ENCODE measurements at regions of chr20 and their contacts with region 1.

Region 1: DNA sequence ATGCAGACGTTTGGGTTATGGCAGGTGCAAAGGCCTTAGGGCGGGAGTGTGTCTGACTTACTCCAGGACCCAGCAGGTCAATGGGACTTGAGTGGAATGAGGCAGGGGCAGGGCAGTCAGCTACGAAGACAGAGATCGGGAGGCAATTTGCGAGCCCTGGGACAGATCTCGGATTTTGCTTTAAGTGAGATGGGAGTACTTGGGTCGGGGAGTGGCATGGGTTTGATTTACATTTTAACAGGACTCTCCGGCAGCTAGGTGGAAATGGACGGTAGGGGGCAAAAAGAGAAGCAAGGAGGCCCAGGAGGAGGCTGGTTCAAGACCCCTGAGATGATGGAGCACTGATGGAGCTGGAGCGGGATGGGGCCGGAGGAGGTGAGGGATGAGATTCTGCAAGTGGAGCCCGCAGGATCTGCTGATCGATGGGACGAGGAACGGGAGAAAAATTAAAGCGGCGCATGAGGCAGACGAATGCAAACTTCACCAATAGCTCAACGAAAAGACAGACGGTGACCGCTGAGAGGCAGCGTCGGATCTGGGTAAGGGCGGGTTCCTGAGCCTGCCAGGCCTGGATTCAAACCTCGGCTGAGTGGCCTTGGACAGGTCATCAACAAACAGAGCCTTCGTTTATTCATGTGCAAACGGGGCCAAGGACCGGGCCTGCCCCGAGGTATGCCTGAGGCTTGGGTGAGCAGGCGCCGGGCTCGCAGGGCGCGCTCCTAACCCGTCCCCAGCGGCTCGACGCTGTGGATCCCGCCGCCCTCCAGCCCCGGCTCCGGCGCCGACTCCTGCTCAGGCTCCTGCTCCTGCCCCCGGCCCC is 756 bp upstream of the RBCK1 start:
- DNase-seq: no peak
- ATAC-seq: peak; percentile 70
- H3K4me3 Mint-ChIP-seq: peak overlapping the region; percentile 88
- H3K27ac Mint-ChIP-seq: peak overlapping the region; percentile 91
- H3K4me1 Mint-ChIP-seq: peaks cover 44% of the 10 kb centered on the region
- H3K27me3 Mint-ChIP-seq: no peaks in the 10 kb centered on the region
- CTCF ChIP-seq: no peak

Region 2: GRCh38 chr20:297098-297924 is 110.0 kb before region 1 on chr20 and contains the start of gene ZCCHC3:
- CTCF ChIA-PET with region 1: no interaction called
- POLR2A ChIA-PET with region 1: interaction called, 6 read pairs
- intact Hi-C with region 1: loop called (anchors 5 kb)
- DNase-seq: peak; percentile 82
- ATAC-seq: peak; percentile 88
- H3K4me3 Mint-ChIP-seq: peak within 1 kb of the TSS; percentile 98
- H3K27ac Mint-ChIP-seq: peak within 1 kb of the TSS; percentile 98
- H3K4me1 Mint-ChIP-seq: peaks cover 44% of the 10 kb centered on the region
- H3K27me3 Mint-ChIP-seq: no peaks in the 10 kb centered on the region
- CTCF ChIP-seq: no peak
- total RNA-seq, gene ZCCHC3: 25.9 and 28.1 TPM in 2 replicates

Region 3: GRCh38 chr20:381581-382290 is 25.6 kb before region 1 on chr20:
- CTCF ChIA-PET with region 1: no interaction called
- POLR2A ChIA-PET with region 1: interaction called, 9 read pairs
- intact Hi-C with region 1: loop called (anchors 1 kb)
- DNase-seq: peak; percentile 64
- ATAC-seq: peak; percentile 79
- H3K4me3 Mint-ChIP-seq: peak overlapping the region; percentile 83
- H3K27ac Mint-ChIP-seq: peak overlapping the region; percentile 80
- H3K4me1 Mint-ChIP-seq: peaks cover 12% of the 10 kb centered on the region
- H3K27me3 Mint-ChIP-seq: no peaks in the 10 kb centered on the region
- CTCF ChIP-seq: no peak

Region 4: DNA sequence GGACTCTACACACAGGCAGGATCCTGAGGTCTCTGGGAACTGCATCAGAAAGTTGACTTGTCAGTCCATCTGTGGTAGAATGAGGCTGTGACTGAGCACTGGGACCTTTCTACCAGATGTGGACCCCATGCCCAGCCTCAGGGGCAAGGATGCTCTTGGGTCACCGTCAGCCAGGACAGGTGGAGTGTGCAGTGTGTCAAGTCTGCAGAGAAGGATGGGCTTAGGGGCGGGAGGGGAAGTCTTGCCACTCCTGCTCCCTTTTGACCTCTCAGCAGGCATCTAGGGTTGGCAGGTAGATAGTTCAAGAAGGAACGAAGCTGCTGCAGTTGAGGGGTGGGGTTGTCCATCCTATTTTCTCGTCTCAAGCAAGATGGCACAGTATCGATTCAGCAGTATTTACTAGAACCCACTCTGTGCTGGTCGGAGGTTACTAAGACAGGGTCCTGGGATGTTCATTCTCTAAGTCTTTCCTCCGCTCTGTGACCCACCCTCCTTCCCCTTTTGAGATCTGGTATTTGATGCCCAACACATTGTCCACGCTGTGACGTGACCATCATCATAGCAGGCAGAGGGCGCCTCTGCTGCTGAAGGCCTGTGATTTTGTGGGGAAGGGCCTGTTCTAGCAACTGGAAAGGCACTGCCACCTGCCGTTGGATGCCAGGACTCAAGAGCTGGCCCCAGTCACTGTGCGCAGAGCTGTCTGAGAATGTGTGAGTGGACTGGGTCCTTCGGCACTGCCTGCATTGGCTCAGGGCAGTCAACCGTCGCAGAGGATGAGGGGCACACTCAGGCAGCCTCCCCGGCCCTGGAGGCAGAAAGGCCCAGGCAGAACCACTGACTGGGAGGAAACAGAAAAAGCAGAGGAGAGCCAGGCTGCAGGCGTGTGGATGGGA is 23.9 kb after region 1 on chr20:
- CTCF ChIA-PET with region 1: no interaction called
- POLR2A ChIA-PET with region 1: interaction called, 6 read pairs
- intact Hi-C with region 1: loop called (anchors 1 kb)
- DNase-seq: no peak
- ATAC-seq: no peak
- H3K4me3 Mint-ChIP-seq: no peak overlapping the region
- H3K27ac Mint-ChIP-seq: peak overlapping the region; percentile 35
- H3K4me1 Mint-ChIP-seq: peaks cover 31% of the 10 kb centered on the region
- H3K27me3 Mint-ChIP-seq: no peaks in the 10 kb centered on the region
- CTCF ChIP-seq: no peak

Region 5: GRCh38 chr20:462199-462991 is 55.1 kb after region 1 on chr20 and contains the start of gene TBC1D20:
- CTCF ChIA-PET with region 1: no interaction called
- POLR2A ChIA-PET with region 1: interaction called, 10 read pairs
- intact Hi-C with region 1: loop called (anchors 1 kb)
- DNase-seq: peak; percentile 91
- ATAC-seq: peak; percentile 96
- H3K4me3 Mint-ChIP-seq: peak within 1 kb of the TSS; percentile 93
- H3K27ac Mint-ChIP-seq: peak within 1 kb of the TSS; percentile 89
- H3K4me1 Mint-ChIP-seq: peaks cover 24% of the 10 kb centered on the region
- H3K27me3 Mint-ChIP-seq: peaks cover 2% of the 10 kb centered on the region
- CTCF ChIP-seq: no peak
- total RNA-seq, gene TBC1D20: 21.4 and 24.1 TPM in 2 replicates

Region 6: DNA sequence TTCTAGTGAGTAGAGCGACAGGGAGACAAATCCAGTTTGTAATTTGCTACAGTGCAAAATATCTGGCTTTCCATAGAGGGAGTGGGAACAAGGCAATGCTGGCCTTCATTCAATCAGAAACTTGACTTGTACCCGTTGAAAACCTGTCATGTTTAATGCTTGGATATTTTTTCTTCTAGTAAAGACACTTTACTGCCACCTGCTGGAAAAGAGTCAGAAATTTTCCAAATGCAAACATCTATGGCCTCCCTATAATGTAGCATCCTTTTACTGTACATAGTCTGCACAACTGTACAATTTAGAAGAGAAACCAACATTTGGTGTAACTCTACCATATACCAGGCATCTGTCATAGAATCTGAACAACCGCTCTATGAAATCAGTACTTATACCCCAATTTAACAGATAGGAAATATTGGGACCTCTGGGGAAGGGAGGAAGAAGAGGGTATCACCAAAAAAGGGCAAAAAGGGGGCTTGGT is 71.6 kb after region 1 on chr20:
- CTCF ChIA-PET with region 1: interaction called, 7 read pairs
- POLR2A ChIA-PET with region 1: no interaction called
- intact Hi-C with region 1: loop called (anchors 1 kb)
- DNase-seq: no peak
- ATAC-seq: peak; percentile 66
- H3K4me3 Mint-ChIP-seq: no peak overlapping the region
- H3K27ac Mint-ChIP-seq: no peak overlapping the region
- H3K4me1 Mint-ChIP-seq: peaks cover 5% of the 10 kb centered on the region
- H3K27me3 Mint-ChIP-seq: no peaks in the 10 kb centered on the region
- CTCF ChIP-seq: no peak

Region 7: GRCh38 chr20:561437-562231 is 154.3 kb after region 1 on chr20:
- CTCF ChIA-PET with region 1: no interaction called
- POLR2A ChIA-PET with region 1: no interaction called
- intact Hi-C with region 1: no loop called
- DNase-seq: no peak
- ATAC-seq: peak; percentile 72
- H3K4me3 Mint-ChIP-seq: no peak overlapping the region
- H3K27ac Mint-ChIP-seq: no peak overlapping the region
- H3K4me1 Mint-ChIP-seq: no peaks in the 10 kb centered on the region
- H3K27me3 Mint-ChIP-seq: peaks cover 17% of the 10 kb centered on the region
- CTCF ChIP-seq: no peak